Posterior vena cava (tissue), 2 donors: ENCODE measurements at regions of chr13 and their contacts with region 1.

Region 1: GRCh38 chr13:77267362-77267761 is 59.5 kb downstream of the MYCBP2 start:
- DNase-seq: no peak

Region 2: GRCh38 chr13:77207943-77208342 is 59.4 kb before region 1 on chr13:
- intact Hi-C with region 1: loop called in 1 of 2 experiments (anchors 2 kb)
- DNase-seq: no peak